ENCODE measurements at regions of chr9 and their contacts with region 1.

Region 1: GRCh38 chr9:96854073-96854876 is at the start of gene ZNF782:
- DNase-seq: peak; percentile 92
- H3K4me3 Mint-ChIP-seq: peak within 1 kb of the TSS; percentile 100
- H3K27ac Mint-ChIP-seq: peak within 1 kb of the TSS; percentile 95
- H3K4me1 Mint-ChIP-seq: peaks cover 51% of the 10 kb centered on the region
- H3K27me3 Mint-ChIP-seq: peaks cover 5% of the 10 kb centered on the region
- total RNA-seq, gene ZNF782: 2.8 to 3.2 TPM

Region 2: DNA sequence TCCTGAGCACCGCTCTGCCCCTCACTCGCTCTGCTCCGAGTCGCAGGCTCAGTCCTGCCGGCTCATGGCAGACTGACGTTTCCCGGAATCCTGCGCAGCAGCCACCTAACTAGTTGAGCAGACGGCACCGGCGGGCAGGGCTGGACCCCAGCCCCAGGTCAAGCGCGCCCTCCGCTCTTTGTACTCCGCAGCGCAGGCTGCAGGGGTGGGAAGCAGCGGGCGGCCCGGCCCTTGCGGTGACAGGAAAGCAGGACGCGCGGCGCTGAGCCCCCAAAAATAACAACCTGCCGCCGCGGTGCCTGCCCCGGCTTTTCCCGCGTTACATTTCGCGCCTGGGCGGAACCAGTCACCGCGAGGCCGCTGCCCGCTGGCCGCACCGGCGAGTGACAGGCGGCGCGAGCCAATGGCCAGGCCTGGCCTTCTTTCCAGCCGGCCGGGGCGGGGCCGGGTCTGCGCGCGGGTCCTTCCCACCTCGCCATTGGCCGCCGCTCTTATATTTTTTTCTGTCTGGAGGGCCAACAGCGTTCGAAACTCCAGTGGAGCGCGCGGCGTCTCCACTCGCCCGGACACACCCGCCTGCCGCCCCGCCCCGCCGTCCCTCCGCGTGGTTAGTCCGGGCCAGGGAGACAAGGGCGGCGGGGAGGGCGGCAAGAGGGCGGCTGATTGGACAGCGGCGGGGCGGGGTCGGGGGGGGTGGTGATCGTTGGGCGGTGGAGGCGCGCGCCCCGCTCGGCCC is 436.0 kb before region 1 on chr9 and contains the start of gene ZNF367:
- CTCF ChIA-PET with region 1: no interaction called
- POLR2A ChIA-PET with region 1: no interaction called
- intact Hi-C with region 1: loop called (anchors 10 kb)
- DNase-seq: peak; percentile 96
- H3K4me3 Mint-ChIP-seq: peak within 1 kb of the TSS; percentile 90
- H3K27ac Mint-ChIP-seq: peak within 1 kb of the TSS; percentile 93
- H3K4me1 Mint-ChIP-seq: peaks cover 37% of the 10 kb centered on the region
- H3K27me3 Mint-ChIP-seq: no peaks in the 10 kb centered on the region
- total RNA-seq, gene ZNF367: 29.0 to 30.1 TPM

Region 3: DNA sequence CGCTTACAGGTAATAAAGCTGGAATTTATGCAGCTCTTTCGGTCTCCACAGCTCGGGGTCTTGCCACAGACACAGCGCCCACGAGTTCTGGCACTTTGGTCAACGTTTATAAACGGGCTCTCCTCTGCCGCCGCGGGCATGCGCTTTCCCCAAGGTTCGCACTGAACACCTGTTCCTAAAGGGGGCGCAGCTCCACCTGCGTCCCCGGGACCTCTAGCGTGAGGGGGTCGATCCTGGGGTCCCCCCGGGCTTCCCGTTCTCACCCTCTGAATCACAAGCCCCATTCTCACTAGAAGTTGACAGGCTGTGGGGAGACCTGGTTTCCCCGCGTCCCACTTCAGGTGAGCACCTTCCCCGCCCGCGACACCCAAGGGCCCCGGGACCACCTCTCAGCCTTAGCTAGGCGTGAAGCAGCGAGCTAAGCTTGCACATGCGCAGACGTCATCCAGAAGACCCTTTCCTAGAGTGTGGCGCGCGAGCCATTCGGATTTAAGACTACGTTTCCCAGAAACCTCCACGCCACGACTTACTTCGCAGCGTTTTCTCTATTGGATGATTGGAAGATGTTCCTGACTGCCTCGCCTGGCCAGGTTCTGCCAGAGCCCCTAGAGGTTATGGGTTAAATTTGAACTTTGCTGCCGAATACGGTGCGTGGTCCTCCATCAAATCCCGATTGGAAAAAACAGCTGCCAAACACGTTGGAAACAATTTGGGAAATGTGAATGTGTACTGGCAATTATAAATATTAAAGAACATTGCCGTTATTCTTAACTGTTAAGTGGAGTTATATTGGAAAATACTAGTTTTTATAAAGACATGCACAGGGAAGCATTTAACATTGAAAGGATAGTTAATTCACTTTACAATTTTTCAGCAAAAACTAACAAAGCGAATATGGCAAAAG is 21.4 kb after region 1 on chr9:
- CTCF ChIA-PET with region 1: interaction called, 13 read pairs
- POLR2A ChIA-PET with region 1: no interaction called
- intact Hi-C with region 1: loop called (anchors 2 kb)
- DNase-seq: peak; percentile 62
- H3K4me3 Mint-ChIP-seq: peak overlapping the region; percentile 77
- H3K27ac Mint-ChIP-seq: peak overlapping the region; percentile 82
- H3K4me1 Mint-ChIP-seq: peaks cover 27% of the 10 kb centered on the region
- H3K27me3 Mint-ChIP-seq: peaks cover 33% of the 10 kb centered on the region

Region 4: GRCh38 chr9:97220894-97221477 is 366.7 kb after region 1 on chr9:
- CTCF ChIA-PET with region 1: interaction called, 29 read pairs
- POLR2A ChIA-PET with region 1: no interaction called
- intact Hi-C with region 1: loop called (anchors 5 kb)
- DNase-seq: no peak
- H3K4me3 Mint-ChIP-seq: peak overlapping the region; percentile 76
- H3K27ac Mint-ChIP-seq: no peak overlapping the region
- H3K4me1 Mint-ChIP-seq: peaks cover 5% of the 10 kb centered on the region
- H3K27me3 Mint-ChIP-seq: peaks cover 38% of the 10 kb centered on the region

Region 5: GRCh38 chr9:97386733-97387503 is 532.6 kb after region 1 on chr9:
- CTCF ChIA-PET with region 1: interaction called, 18 read pairs
- POLR2A ChIA-PET with region 1: no interaction called
- intact Hi-C with region 1: no loop called
- DNase-seq: peak; percentile 87
- H3K4me3 Mint-ChIP-seq: no peak overlapping the region
- H3K27ac Mint-ChIP-seq: no peak overlapping the region
- H3K4me1 Mint-ChIP-seq: peaks cover 16% of the 10 kb centered on the region
- H3K27me3 Mint-ChIP-seq: peaks cover 19% of the 10 kb centered on the region

Region 6: GRCh38 chr9:97598461-97599288 is 744.4 kb after region 1 on chr9:
- CTCF ChIA-PET with region 1: interaction called, 20 read pairs
- POLR2A ChIA-PET with region 1: no interaction called
- intact Hi-C with region 1: loop called (anchors 2 kb)
- DNase-seq: peak; percentile 77
- H3K4me3 Mint-ChIP-seq: no peak overlapping the region
- H3K27ac Mint-ChIP-seq: no peak overlapping the region
- H3K4me1 Mint-ChIP-seq: peaks cover 6% of the 10 kb centered on the region
- H3K27me3 Mint-ChIP-seq: no peaks in the 10 kb centered on the region

Measured in activated CD4-positive, alpha-beta memory T cell treated with anti-CD3 and anti-CD28 coated beads for 36 hours (primary cell).